Esophagus muscularis mucosa (tissue), 4 donors: ENCODE measurements at regions of chr11 and their contacts with region 1.

Region 1: DNA sequence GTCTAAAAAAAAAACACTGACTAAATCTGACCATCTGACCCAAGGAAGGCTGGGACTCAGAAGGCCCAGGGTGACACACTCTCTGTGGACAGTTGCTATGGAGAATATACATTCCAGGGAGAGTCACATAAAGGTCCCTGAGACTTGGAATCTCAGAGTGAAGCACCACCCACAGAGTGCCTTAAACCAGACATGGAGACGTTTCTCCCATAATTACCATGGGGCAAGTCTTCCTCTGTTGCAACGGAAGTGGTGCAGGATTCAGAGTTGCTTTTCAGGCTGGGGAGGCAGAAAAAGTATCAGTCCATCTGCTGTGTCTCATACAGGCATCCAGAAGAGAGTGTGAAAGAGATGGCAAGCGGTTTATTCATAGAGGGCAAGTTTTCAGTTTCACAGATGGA is 58.7 kb upstream of the SLN start:
- DNase-seq: peak; percentile 62
- H3K4me3 ChIP-seq: no peak overlapping the region
- H3K27ac ChIP-seq: no peak overlapping the region
- H3K4me1 ChIP-seq: peaks cover 0 to 6% (median 2%) of the 10 kb centered on the region in 4 donors
- H3K27me3 ChIP-seq: no peaks in the 10 kb centered on the region
- CTCF ChIP-seq: no peak
- EP300 ChIP-seq: no peak
- POLR2A ChIP-seq: no peak

Region 2: GRCh38 chr11:107563702-107564101 is 206.8 kb before region 1 on chr11:
- intact Hi-C with region 1: loop called (anchors 5 kb)
- DNase-seq: no peak
- H3K4me3 ChIP-seq: no peak overlapping the region
- H3K27ac ChIP-seq: peak overlapping the region in 3 of 4 donors; percentile 4 to 21 (median 17)
- H3K4me1 ChIP-seq: peaks cover 20 to 34% (median 25%) of the 10 kb centered on the region in 4 donors
- H3K27me3 ChIP-seq: no peaks in the 10 kb centered on the region
- CTCF ChIP-seq: peak; percentile 58 to 61 (median 61)
- EP300 ChIP-seq: no peak
- POLR2A ChIP-seq: no peak

Region 3: GRCh38 chr11:107577346-107577711 is 193.2 kb before region 1 on chr11:
- intact Hi-C with region 1: loop called (anchors 5 kb)
- DNase-seq: no peak
- H3K4me3 ChIP-seq: no peak overlapping the region
- H3K27ac ChIP-seq: no peak overlapping the region
- H3K4me1 ChIP-seq: no peaks in the 10 kb centered on the region
- H3K27me3 ChIP-seq: no peaks in the 10 kb centered on the region
- CTCF ChIP-seq: no peak
- EP300 ChIP-seq: no peak
- POLR2A ChIP-seq: no peak